H1 (cell line): ENCODE measurements at regions of chr17 and their contacts with region 1.

Region 1: GRCh38 chr17:1716076-1716995 is 6.2 kb upstream of the TLCD2 start:
- DNase-seq: peak; percentile 99 to 100
- H3K4me3 ChIP-seq: peak overlapping the region; percentile 74 to 94 (median 82)
- H3K27ac ChIP-seq: peak overlapping the region; percentile 94
- H3K4me1 ChIP-seq: peaks cover 0 to 16% (median 12%) of the 10 kb centered on the region in 4 experiments; a peak in 6 of 7 replicates
- H3K27me3 ChIP-seq: no peaks in the 10 kb centered on the region
- CTCF ChIP-seq: no peak; a peak in 1 of 4 replicates
- EP300 ChIP-seq: no peak
- POLR2A ChIP-seq: peak; percentile 32 to 70
- RAD21 ChIP-seq: no peak

Region 2: GRCh38 chr17:1684378-1685189 is 31.8 kb before region 1 on chr17 and contains the start of gene PRPF8:
- CTCF ChIA-PET with region 1: interaction called, 10 read pairs
- POLR2A ChIA-PET with region 1: interaction called, 15 read pairs
- DNase-seq: peak; percentile 90 to 98
- H3K4me3 ChIP-seq: peak within 1 kb of the TSS; percentile 78 to 87 (median 82)
- H3K27ac ChIP-seq: peak within 1 kb of the TSS; percentile 63; the same call in 1 of the 2 replicates
- H3K4me1 ChIP-seq: peaks cover 0 to 5% (median 3%) of the 10 kb centered on the region in 4 experiments; a peak in 3 of 7 replicates
- H3K27me3 ChIP-seq: no peaks in the 10 kb centered on the region
- CTCF ChIP-seq: no peak
- EP300 ChIP-seq: no peak
- POLR2A ChIP-seq: peak; percentile 63 to 84
- RAD21 ChIP-seq: no peak
- total RNA-seq, gene PRPF8: 328 and 329 TPM in 2 replicates

Region 3: DNA sequence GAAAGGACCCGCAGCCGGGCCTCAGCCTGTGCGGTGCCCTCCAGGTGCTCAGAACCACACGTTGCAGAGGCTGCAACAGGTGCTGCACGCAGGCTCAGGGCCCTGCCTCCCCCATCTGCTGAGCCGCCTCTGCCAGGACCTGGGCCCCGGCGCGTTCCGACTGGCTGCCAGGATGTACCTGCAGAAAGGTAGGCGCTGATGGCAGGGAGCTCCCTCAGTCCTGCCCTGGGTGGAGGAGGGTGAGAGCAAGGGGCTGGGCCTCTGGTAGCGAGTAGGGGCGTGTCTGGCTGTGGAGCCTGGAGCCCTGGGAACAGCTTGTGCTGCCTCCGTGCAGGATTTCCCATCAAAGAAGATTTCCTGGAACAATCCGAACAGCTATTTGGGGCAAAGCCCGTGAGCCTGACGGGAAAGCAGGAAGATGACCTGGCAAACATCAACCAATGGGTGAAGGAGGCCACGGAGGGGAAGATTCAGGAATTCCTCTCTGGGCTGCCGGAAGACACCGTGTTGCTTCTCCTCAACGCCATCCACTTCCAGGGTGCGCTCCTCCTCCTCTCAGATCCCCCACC is 30.7 kb after region 1 on chr17:
- CTCF ChIA-PET with region 1: interaction called, 48 read pairs
- POLR2A ChIA-PET with region 1: interaction called, 30 read pairs
- DNase-seq: peak in 1 of 2 experiments; percentile 72
- H3K4me3 ChIP-seq: no peak overlapping the region
- H3K27ac ChIP-seq: no peak overlapping the region
- H3K4me1 ChIP-seq: peaks cover 0 to 8% (median 3%) of the 10 kb centered on the region in 4 experiments; a peak in 4 of 7 replicates
- H3K27me3 ChIP-seq: no peaks in the 10 kb centered on the region; a peak in 1 of 7 replicates
- CTCF ChIP-seq: no peak
- EP300 ChIP-seq: no peak
- POLR2A ChIP-seq: no peak
- RAD21 ChIP-seq: no peak

Region 4: GRCh38 chr17:1764284-1764683 is 47.9 kb after region 1 on chr17:
- CTCF ChIA-PET with region 1: interaction called, 42 read pairs
- POLR2A ChIA-PET with region 1: interaction called, 31 read pairs
- DNase-seq: no peak
- H3K4me3 ChIP-seq: no peak overlapping the region
- H3K27ac ChIP-seq: no peak overlapping the region
- H3K4me1 ChIP-seq: peaks cover 0 to 25% (median 21%) of the 10 kb centered on the region in 4 experiments; a peak in 6 of 7 replicates
- H3K27me3 ChIP-seq: no peaks in the 10 kb centered on the region; a peak in 2 of 7 replicates
- CTCF ChIP-seq: no peak
- EP300 ChIP-seq: no peak
- POLR2A ChIP-seq: no peak
- RAD21 ChIP-seq: no peak

Region 5: DNA sequence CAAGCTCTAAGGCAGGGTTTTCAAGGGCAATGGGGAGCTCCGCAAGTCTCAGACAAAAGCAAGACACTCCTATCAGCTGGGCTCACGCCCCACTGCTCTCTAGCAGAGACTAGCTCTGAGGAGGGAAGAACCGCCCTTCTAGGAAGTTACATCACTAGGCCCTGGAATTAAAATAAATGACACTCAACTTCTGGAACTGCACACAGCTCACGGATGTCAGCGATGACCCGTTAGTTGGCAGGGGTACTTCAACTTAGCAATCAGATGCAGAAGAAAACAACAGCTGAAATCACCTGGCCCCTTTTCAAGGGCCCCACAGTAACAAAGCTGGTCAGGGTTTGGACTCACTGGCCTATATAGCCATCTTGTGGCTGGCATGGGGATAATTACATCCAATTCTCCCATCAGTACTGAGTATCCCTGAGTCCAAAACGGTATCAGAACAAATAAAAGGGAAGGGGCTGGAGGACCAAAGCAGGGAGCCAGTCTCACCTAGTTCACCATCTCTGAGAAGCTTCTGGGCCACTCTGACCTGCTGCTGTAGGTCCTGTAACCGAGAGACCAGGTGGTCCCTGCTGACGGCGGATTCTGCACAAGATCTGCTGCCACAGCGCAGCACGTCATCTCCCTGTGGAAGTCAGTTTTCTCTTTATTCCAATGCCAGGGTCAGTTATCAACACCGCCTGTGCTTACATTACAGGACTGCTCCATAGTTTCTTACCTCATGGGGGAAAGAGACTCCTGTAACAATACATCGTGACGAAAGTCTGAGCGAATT is 67.7 kb after region 1 on chr17:
- CTCF ChIA-PET with region 1: interaction called, 117 read pairs
- POLR2A ChIA-PET with region 1: interaction called, 13 read pairs
- DNase-seq: no peak
- H3K4me3 ChIP-seq: no peak overlapping the region
- H3K27ac ChIP-seq: no peak overlapping the region
- H3K4me1 ChIP-seq: no peaks in the 10 kb centered on the region
- H3K27me3 ChIP-seq: no peaks in the 10 kb centered on the region
- CTCF ChIP-seq: peak; percentile 9 to 68 (median 59)
- EP300 ChIP-seq: no peak
- POLR2A ChIP-seq: no peak
- RAD21 ChIP-seq: peak; percentile 79 to 83

Region 6: DNA sequence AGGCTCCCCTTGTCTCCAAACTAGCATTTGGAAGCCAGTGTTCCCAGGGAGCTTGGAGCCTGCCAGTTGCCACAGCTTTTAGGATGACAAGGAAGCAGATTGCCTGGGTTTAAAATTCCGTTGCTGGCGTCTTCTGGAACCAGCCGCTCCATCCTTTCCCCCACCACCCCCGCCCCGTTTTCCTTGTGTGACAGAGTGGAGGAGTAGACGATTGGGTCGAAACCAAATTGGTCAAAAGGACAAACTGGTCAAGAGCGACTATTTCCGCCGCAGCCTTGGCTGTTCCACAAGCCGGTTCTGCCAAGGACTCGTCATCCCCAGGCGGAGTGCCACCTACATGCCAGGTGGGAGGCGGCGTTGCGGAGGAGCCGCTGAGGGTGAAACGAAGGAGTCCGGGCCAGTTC is 204.6 kb after region 1 on chr17:
- CTCF ChIA-PET with region 1: no interaction called
- POLR2A ChIA-PET with region 1: no interaction called
- DNase-seq: no peak
- H3K4me3 ChIP-seq: no peak overlapping the region
- H3K27ac ChIP-seq: no peak overlapping the region
- H3K4me1 ChIP-seq: no peaks in the 10 kb centered on the region
- H3K27me3 ChIP-seq: no peaks in the 10 kb centered on the region; a peak in 2 of 7 replicates
- CTCF ChIP-seq: no peak
- EP300 ChIP-seq: no peak
- POLR2A ChIP-seq: no peak
- RAD21 ChIP-seq: no peak

Region 7: DNA sequence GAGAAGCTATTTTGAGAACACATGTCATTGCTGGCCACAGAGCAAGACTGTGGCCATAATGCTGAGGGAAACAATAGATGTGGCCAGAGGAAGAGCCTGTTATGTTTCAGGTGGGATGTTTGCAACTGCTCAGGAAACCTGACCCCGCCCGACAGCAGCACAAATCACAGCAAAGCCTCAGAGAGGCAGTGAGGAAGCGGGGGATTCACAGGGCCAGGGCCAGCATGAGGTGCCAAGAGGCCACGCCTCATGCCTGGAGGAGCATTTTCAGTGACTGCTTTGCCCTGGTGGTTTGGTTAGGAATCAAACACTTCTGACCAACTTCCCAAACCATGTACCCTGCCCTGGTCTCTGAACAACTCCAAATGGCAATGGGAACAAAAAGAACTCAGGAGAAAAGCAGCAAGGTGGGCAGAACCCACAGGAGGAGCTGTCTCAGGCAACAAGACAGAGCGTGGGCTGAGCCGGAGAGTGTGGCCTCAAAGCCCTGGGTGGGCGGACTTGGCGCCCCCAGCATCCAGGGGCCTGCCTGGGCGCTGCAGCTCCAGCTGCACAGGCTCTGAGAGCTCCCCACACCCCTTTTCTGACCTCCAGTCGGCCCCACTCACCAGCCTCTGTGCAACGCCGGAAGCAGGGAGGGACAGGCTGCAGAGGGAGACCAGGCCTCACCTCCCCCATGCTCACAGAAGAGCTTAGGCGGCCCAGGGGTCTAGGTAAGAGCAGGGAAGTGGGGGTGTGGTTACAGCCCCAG is 359.2 kb after region 1 on chr17:
- CTCF ChIA-PET with region 1: no interaction called
- POLR2A ChIA-PET with region 1: no interaction called
- DNase-seq: no peak
- H3K4me3 ChIP-seq: no peak overlapping the region
- H3K27ac ChIP-seq: no peak overlapping the region; the same call in 1 of the 2 replicates
- H3K4me1 ChIP-seq: peaks cover 2 to 12% (median 5%) of the 10 kb centered on the region in 4 experiments; a peak in 6 of 7 replicates
- H3K27me3 ChIP-seq: no peaks in the 10 kb centered on the region
- CTCF ChIP-seq: peak in 2 of 3 experiments; percentile 5 to 8; a peak in 1 of 4 replicates
- EP300 ChIP-seq: no peak
- POLR2A ChIP-seq: no peak
- RAD21 ChIP-seq: peak in 1 of 2 experiments; percentile 1; a peak in 1 of 4 replicates